A549 (cell line): ENCODE measurements at regions of chr2 and their contacts with region 1.

Region 1: DNA sequence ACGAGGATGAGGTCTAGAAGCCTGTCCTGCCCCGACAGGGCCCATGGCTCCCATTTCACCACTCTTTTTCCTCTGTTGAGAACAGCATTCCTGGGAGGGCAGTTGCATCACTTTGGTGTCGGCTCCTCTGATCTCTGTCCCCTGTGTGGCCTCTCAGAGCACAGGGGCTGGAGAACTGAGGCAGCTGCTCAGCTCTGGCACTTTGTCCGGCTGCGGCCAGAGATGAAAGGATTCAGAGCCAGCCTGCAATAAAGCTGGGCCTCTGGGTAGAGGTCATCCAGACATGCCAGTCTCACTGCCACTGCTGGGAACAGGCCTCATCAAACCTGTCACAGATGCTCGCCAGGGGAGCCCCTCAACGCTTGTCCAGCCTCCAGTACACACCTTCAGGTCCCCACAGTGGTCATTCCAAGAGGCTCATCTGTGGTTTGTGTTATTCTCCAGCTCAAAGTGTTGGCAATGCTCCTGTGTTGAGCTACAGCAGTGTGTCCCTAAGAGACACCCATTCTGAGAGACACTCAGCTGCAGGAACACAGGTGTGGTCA is 13.1 kb upstream of the ROCK2 start:
- DNase-seq: no peak
- ATAC-seq: peak; percentile 32 to 40; a peak in 4 of 6 replicates
- H3K4me3 ChIP-seq: no peak overlapping the region
- H3K27ac ChIP-seq: peak overlapping the region in 1 of 2 experiments; percentile 52; a peak in 3 of 6 replicates
- H3K4me1 ChIP-seq: 0 out of 3 replicates have a peak, but pooled peaks cover 5% of the 10 kb centered on the region
- CTCF ChIP-seq: no peak
- EP300 ChIP-seq: no peak
- POLR2A ChIP-seq: no peak
- RAD21 ChIP-seq: no peak

Region 2: GRCh38 chr2:11377928-11378545 is 20.5 kb after region 1 on chr2:
- CTCF ChIA-PET with region 1: interaction called, 11 read pairs
- POLR2A ChIA-PET with region 1: no interaction called
- DNase-seq: no peak
- ATAC-seq: no peak
- H3K4me3 ChIP-seq: no peak overlapping the region
- H3K27ac ChIP-seq: peak overlapping the region in 1 of 2 experiments; percentile 50; a peak in 4 of 6 replicates
- H3K4me1 ChIP-seq: peaks cover 40% of the 10 kb centered on the region
- CTCF ChIP-seq: no peak
- EP300 ChIP-seq: no peak
- POLR2A ChIP-seq: no peak
- RAD21 ChIP-seq: no peak